H1 (cell line): ENCODE measurements at regions of chr12 and their contacts with region 1.

Region 1: GRCh38 chr12:15220994-15221885 is at the start of gene RERG:
- DNase-seq: peak; percentile 67 to 92
- H3K4me3 ChIP-seq: peak within 1 kb of the TSS; percentile 46 to 60 (median 52)
- H3K27ac ChIP-seq: no peak within 1 kb of the TSS
- H3K4me1 ChIP-seq: peaks cover 0 to 3% (median 3%) of the 10 kb centered on the region in 4 experiments; a peak in 4 of 7 replicates
- H3K27me3 ChIP-seq: peaks cover 0 to 9% (median 6%) of the 10 kb centered on the region in 4 experiments; a peak in 6 of 7 replicates
- CTCF ChIP-seq: peak; percentile 89 to 99 (median 93)
- EP300 ChIP-seq: no peak
- POLR2A ChIP-seq: no peak
- RAD21 ChIP-seq: peak; percentile 91 to 95
- total RNA-seq, gene RERG: 0.55 and 0.86 TPM in 2 replicates

Region 2: DNA sequence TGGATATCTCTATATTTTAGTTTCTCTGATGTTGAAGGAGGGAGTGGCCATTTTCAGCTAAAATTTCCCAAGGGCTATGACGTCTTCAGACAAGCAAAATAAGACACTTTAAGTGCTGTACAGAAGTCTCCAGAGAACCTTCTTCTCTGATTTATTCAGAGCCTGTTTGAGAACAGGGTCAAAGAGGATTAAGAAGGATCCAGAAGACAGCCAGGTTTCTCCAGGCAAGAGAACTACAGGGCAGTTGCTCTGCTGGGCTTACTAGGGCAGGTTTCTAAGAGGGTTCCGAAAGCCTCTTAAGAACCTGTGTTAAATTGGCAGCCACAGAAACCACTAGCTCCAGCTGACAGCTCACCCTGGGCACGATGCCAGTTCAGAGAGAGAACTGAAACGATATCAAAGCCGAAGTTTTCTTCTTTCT is 336.8 kb before region 1 on chr12:
- CTCF ChIA-PET with region 1: no interaction called
- POLR2A ChIA-PET with region 1: no interaction called
- DNase-seq: no peak
- H3K4me3 ChIP-seq: no peak overlapping the region
- H3K27ac ChIP-seq: no peak overlapping the region
- H3K4me1 ChIP-seq: no peaks in the 10 kb centered on the region
- H3K27me3 ChIP-seq: no peaks in the 10 kb centered on the region
- CTCF ChIP-seq: no peak
- EP300 ChIP-seq: no peak
- POLR2A ChIP-seq: no peak
- RAD21 ChIP-seq: no peak

Region 3: GRCh38 chr12:14995583-14996425 is 225.4 kb before region 1 on chr12:
- CTCF ChIA-PET with region 1: interaction called, 10 read pairs
- POLR2A ChIA-PET with region 1: no interaction called
- DNase-seq: no peak
- H3K4me3 ChIP-seq: no peak overlapping the region
- H3K27ac ChIP-seq: no peak overlapping the region
- H3K4me1 ChIP-seq: no peaks in the 10 kb centered on the region
- H3K27me3 ChIP-seq: no peaks in the 10 kb centered on the region
- CTCF ChIP-seq: peak in 2 of 3 experiments; percentile 40 to 43; a peak in 2 of 4 replicates
- EP300 ChIP-seq: no peak
- POLR2A ChIP-seq: no peak
- RAD21 ChIP-seq: peak in 1 of 2 experiments; percentile 77

Region 4: DNA sequence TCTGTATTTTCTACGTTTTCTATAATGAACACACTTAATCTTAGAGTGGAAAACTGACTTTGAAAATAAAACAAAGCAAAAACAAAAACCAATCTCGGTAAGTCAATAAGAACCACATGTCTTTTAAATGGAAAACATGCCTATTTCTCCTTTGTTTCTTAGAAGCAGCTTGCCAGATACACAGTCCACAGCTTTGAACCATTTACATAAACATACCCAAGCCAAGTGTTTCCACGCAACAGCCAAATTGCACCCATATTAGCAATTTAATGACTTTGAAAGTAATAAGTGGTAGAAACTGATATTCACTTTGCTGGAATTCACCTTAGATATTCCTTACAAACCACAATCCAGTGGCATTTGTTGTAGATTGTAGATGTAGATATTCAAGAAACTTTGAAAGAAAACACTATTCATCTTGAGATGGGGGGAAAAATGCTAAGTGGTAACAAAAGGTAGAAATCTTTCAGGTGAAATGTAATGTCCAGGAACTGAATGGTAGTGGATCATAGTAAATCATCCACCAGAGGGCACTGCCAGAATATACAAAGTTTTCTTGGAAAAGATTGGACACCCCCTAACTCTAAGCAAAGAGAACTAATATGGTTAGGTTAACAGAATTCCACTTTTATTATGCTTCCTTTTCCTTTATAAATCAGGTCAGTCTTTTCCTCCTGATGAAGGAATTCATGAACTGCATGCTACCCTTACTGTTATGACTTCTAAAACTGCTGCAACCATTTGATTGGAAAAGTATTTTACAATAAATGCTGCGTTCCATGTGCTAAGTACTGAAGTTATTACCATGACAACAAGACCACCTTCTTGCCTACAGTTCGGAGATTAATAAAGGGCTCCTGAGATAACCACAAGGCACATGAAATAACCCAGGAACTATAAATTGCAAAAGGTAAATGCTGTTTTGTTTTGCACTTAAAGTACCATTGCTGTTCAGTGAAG is 69.8 kb before region 1 on chr12:
- CTCF ChIA-PET with region 1: interaction called, 40 read pairs
- POLR2A ChIA-PET with region 1: no interaction called
- DNase-seq: no peak
- H3K4me3 ChIP-seq: no peak overlapping the region
- H3K27ac ChIP-seq: no peak overlapping the region
- H3K4me1 ChIP-seq: no peaks in the 10 kb centered on the region
- H3K27me3 ChIP-seq: no peaks in the 10 kb centered on the region
- CTCF ChIP-seq: peak in 2 of 3 experiments; percentile 29 to 46; a peak in 2 of 4 replicates
- EP300 ChIP-seq: no peak
- POLR2A ChIP-seq: no peak
- RAD21 ChIP-seq: peak; percentile 45 to 58

Region 5: DNA sequence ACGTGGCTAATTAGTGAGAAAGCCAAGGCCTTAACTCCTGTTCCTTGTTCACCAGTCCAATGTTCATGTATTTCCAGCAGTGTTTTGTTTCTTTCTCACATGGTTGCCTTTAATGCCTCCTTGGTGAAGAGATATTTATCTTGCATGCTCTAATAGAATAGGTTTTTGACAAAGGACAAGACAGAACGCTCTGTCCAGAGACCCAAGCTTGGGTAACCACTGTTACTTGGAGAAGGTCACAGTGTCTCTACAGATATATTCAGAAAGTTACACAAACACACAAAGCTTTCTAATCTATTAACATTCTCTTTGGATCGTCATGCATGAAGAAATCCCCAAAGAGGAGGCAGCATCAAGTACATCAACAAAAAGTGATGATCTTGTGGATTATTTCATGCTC is 33.1 kb before region 1 on chr12:
- CTCF ChIA-PET with region 1: interaction called, 41 read pairs
- POLR2A ChIA-PET with region 1: interaction called, 3 read pairs
- DNase-seq: no peak
- H3K4me3 ChIP-seq: no peak overlapping the region
- H3K27ac ChIP-seq: no peak overlapping the region
- H3K4me1 ChIP-seq: no peaks in the 10 kb centered on the region
- H3K27me3 ChIP-seq: no peaks in the 10 kb centered on the region
- CTCF ChIP-seq: no peak
- EP300 ChIP-seq: no peak
- POLR2A ChIP-seq: no peak
- RAD21 ChIP-seq: no peak

Region 6: DNA sequence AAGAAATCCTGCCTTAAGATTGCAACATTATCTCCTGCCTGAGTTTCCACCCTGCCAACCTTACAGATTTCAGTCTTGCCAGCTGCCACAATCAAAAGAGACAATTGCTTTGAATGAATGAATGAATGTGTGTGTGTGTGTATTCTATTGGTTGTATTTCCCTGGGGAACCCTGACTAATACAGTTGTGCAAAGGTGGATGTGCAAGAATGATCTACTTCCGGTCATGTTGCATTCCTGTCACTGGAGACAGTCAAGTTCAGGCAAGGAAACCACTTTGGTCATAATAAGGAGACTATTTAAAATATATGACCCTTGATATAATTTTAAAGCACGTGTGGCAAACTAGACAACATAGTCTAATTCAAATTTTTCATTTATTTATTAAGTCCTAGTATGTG is 13.1 kb before region 1 on chr12:
- CTCF ChIA-PET with region 1: interaction called, 33 read pairs
- POLR2A ChIA-PET with region 1: no interaction called
- DNase-seq: no peak
- H3K4me3 ChIP-seq: no peak overlapping the region
- H3K27ac ChIP-seq: no peak overlapping the region
- H3K4me1 ChIP-seq: peaks cover 0 to 6% (median 3%) of the 10 kb centered on the region in 4 experiments; a peak in 4 of 7 replicates
- H3K27me3 ChIP-seq: no peaks in the 10 kb centered on the region
- CTCF ChIP-seq: peak in 1 of 3 experiments; percentile 36; a peak in 2 of 4 replicates
- EP300 ChIP-seq: no peak
- POLR2A ChIP-seq: no peak
- RAD21 ChIP-seq: no peak

Region 7: DNA sequence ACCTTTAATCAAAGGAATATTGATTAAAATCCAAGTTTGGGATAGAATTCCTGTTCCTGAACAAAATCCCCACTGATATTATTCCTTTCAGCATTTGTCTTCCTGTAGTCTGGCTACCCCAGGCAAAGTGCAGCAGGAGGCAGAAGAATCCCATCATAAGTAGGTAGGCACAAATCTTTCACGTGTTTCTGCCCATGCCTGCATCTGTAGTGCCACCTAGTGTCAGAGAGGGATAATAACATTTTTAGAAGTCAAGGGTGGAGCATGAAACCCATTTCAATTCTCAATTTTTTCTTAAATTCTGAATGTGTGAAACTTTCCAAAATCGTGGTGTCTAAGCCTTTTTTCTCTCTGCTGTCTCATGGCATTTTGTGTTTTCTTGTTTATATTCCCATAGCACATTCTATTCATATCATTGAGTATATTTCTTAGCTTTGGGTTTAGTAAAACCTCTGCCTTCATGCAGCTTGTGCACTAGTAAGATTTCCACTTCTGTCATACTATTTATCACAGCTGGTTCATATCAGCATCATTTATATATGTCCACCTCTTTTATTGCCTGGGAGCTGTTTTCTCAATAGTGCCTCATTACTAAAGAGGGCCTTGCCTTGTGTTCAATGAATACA is 47.8 kb after region 1 on chr12:
- CTCF ChIA-PET with region 1: interaction called, 11 read pairs
- POLR2A ChIA-PET with region 1: no interaction called
- DNase-seq: no peak
- H3K4me3 ChIP-seq: no peak overlapping the region
- H3K27ac ChIP-seq: no peak overlapping the region
- H3K4me1 ChIP-seq: no peaks in the 10 kb centered on the region
- H3K27me3 ChIP-seq: no peaks in the 10 kb centered on the region
- CTCF ChIP-seq: peak in 2 of 3 experiments; percentile 86 to 89; a peak in 3 of 4 replicates
- EP300 ChIP-seq: no peak
- POLR2A ChIP-seq: no peak
- RAD21 ChIP-seq: peak; percentile 90

Region 8: GRCh38 chr12:15522565-15523187 is 301.4 kb after region 1 on chr12:
- CTCF ChIA-PET with region 1: interaction called, 13 read pairs
- POLR2A ChIA-PET with region 1: interaction called, 4 read pairs
- DNase-seq: no peak
- H3K4me3 ChIP-seq: no peak overlapping the region
- H3K27ac ChIP-seq: no peak overlapping the region
- H3K4me1 ChIP-seq: no peaks in the 10 kb centered on the region
- H3K27me3 ChIP-seq: no peaks in the 10 kb centered on the region
- CTCF ChIP-seq: peak in 2 of 3 experiments; percentile 44 to 53; a peak in 2 of 4 replicates
- EP300 ChIP-seq: no peak
- POLR2A ChIP-seq: no peak
- RAD21 ChIP-seq: peak; percentile 83 to 86